Activated CD4-positive, alpha-beta memory T cell treated with anti-CD3 and anti-CD28 coated beads, Interleukin-2, amount 10 ng/mL, durations not matched to agents 7 days and 5 days (primary cell): ENCODE measurements at regions of chr4 and their contacts with region 1.

Region 1: GRCh38 chr4:184417802-184418511 is 56.4 kb downstream of the IRF2 start:
- DNase-seq: peak; percentile 36
- H3K4me3 Mint-ChIP-seq: peak overlapping the region; percentile 77
- H3K27ac Mint-ChIP-seq: peak overlapping the region; percentile 98
- H3K4me1 Mint-ChIP-seq: peaks cover 92% of the 10 kb centered on the region
- H3K27me3 Mint-ChIP-seq: no peaks in the 10 kb centered on the region

Region 2: GRCh38 chr4:184310171-184310567 is 107.8 kb before region 1 on chr4:
- CTCF ChIA-PET with region 1: no interaction called
- POLR2A ChIA-PET with region 1: interaction called, 12 read pairs
- DNase-seq: peak; percentile 79
- H3K4me3 Mint-ChIP-seq: peak overlapping the region; percentile 11
- H3K27ac Mint-ChIP-seq: peak overlapping the region; percentile 80
- H3K4me1 Mint-ChIP-seq: peaks cover 67% of the 10 kb centered on the region
- H3K27me3 Mint-ChIP-seq: no peaks in the 10 kb centered on the region

Region 3: GRCh38 chr4:184453365-184454160 is 35.6 kb after region 1 on chr4:
- CTCF ChIA-PET with region 1: no interaction called
- POLR2A ChIA-PET with region 1: interaction called, 13 read pairs
- DNase-seq: peak; percentile 43
- H3K4me3 Mint-ChIP-seq: no peak overlapping the region
- H3K27ac Mint-ChIP-seq: peak overlapping the region; percentile 59
- H3K4me1 Mint-ChIP-seq: peaks cover 59% of the 10 kb centered on the region
- H3K27me3 Mint-ChIP-seq: no peaks in the 10 kb centered on the region

Region 4: DNA sequence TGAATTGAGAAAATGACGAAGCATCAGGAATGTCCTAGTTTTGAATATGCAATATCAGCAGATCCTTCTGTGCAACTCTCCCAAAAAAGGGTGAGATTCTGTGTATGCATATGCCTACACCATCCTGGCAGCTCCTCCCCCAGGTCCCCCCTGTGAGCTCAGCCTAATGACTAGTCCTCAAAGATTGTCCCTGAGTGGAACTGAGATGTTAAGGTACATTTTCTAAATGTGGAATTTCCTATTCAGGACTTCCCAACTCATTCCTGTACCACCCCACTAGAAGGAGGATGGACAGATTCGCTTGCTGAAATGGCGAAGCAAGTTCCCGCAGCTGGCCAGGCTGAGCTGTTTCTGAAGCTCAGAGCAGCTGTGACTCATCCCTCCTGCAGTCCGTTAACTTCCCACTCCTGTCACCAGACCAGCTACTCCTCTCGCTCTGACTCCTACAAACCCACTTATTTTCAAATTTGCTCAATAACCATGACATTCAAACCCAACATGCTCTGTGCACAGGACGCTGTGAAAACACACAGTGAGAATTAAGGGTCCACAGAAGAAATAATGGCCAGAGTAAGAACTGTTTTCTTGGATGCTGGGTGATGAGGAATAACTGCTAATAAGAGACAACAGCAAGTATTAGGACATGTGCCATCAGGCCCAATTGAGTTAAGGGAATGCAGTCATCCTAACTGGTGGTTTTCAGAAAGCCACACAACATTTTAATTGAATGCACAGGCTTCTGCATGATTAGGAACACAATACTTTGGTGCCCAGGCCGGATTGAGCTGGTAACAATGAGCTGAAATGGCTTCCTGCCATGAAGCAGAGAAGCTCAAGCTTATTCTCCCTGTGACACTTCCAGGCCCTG is 96.4 kb after region 1 on chr4:
- CTCF ChIA-PET with region 1: interaction called, 3 read pairs
- POLR2A ChIA-PET with region 1: interaction called, 23 read pairs
- DNase-seq: peak; percentile 71
- H3K4me3 Mint-ChIP-seq: peak overlapping the region; percentile 32
- H3K27ac Mint-ChIP-seq: peak overlapping the region; percentile 89
- H3K4me1 Mint-ChIP-seq: peaks cover 47% of the 10 kb centered on the region
- H3K27me3 Mint-ChIP-seq: no peaks in the 10 kb centered on the region